AG04449 (cell line): ENCODE measurements at regions of chr5 and their contacts with region 1.

Region 1: GRCh38 chr5:172293054-172293744 is 9.6 kb upstream of the UBTD2 start:
- DNase-seq: no peak
- H3K4me3 ChIP-seq: no peak overlapping the region
- CTCF ChIP-seq: peak; percentile 81

Region 2: GRCh38 chr5:172106511-172107356 is 186.5 kb before region 1 on chr5:
- CTCF ChIA-PET with region 1: interaction called, 18 read pairs
- POLR2A ChIA-PET with region 1: no interaction called
- DNase-seq: no peak
- H3K4me3 ChIP-seq: 0 out of 2 replicates have a peak overlapping the region, but pooled peaks have one; percentile 2
- CTCF ChIP-seq: peak; percentile 89

Region 3: DNA sequence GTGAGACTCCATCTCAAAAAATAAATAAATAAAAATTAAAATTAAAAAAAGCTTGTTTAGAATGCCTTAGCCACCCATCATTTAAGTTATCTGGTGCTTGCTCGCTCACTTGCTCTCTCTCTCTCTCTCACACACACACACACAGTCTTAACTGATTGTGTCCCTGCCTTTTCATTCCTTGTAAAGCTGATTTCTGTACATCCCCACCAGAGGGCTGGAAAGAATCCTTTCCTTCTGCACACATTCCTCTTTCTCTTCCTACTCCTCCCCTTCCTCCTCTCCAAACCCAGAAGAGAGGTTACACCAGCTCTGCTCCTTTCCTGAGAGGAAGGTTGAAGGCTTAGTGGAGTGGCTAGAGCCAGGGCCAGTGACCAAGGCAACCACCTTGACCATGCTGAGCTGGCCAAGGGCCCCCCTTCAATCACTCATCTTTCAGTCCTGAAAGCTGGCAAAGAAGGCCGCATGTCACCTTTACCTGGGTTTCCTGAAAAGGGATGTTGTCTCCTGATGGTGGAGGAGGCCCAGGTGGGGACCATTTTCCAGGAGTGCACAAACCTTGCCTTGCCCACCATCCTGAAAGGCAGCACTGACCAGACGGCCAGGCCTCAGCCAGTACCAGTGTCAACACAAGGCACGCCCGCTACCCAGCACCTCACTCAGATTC is 130.7 kb before region 1 on chr5:
- CTCF ChIA-PET with region 1: interaction called, 10 read pairs
- POLR2A ChIA-PET with region 1: no interaction called
- DNase-seq: no peak
- H3K4me3 ChIP-seq: no peak overlapping the region
- CTCF ChIP-seq: peak; percentile 23

Region 4: GRCh38 chr5:172266676-172267092 is 26.5 kb before region 1 on chr5:
- CTCF ChIA-PET with region 1: no interaction called
- POLR2A ChIA-PET with region 1: no interaction called
- DNase-seq: no peak
- H3K4me3 ChIP-seq: no peak overlapping the region
- CTCF ChIP-seq: no peak

Region 5: DNA sequence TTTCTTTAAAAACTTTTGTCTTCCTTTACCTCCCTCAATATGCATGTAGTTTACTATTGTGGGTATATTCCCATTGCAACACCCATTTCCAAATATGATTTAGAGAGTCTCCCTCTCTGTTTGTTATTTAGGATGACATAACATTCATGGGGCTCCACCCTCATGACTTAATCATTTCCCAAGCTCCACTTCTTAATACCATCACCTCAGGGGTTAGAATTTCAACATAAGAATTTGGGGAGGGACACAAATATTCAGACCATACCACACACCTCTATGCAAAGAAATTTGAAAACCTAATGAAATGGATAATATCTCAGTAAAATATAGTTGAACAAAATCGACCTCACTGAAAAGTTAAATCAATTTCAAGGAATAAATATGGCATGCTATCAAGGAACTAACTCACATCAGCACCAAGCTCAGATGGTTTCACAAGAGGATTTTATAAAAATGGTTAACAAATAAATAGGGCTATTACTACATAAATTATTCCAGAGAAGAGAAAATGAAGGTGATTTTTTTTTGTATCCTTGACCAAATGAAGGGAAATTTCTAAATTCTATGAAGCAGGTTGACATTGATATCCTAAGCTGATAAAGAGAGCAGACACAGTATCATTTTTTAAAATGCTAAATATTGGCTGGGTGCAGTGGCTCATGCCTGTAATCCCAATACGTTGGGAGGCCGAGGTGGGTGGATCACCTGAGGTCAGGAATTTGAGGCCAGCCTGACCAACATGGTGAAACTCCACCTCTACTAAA is 10.6 kb after region 1 on chr5:
- CTCF ChIA-PET with region 1: interaction called, 55 read pairs
- POLR2A ChIA-PET with region 1: no interaction called
- DNase-seq: no peak
- H3K4me3 ChIP-seq: no peak overlapping the region
- CTCF ChIP-seq: no peak

Region 6: GRCh38 chr5:172334196-172334595 is 41.0 kb after region 1 on chr5:
- CTCF ChIA-PET with region 1: no interaction called
- POLR2A ChIA-PET with region 1: no interaction called
- DNase-seq: no peak
- H3K4me3 ChIP-seq: no peak overlapping the region
- CTCF ChIP-seq: no peak

Region 7: GRCh38 chr5:172583931-172584511 is 290.8 kb after region 1 on chr5:
- CTCF ChIA-PET with region 1: no interaction called
- POLR2A ChIA-PET with region 1: no interaction called
- DNase-seq: no peak
- H3K4me3 ChIP-seq: no peak overlapping the region
- CTCF ChIP-seq: no peak